HEK293 (cell line): ENCODE measurements at regions of chr17 and their contacts with region 1.

Region 1: GRCh38 chr17:61338000-61338798 is 61.4 kb upstream of the TBX2 start:
- H3K4me3 ChIP-seq: no peak overlapping the region
- H3K27ac ChIP-seq: peak overlapping the region; percentile 42
- H3K4me1 ChIP-seq: peaks cover 33% of the 10 kb centered on the region
- CTCF ChIP-seq: no peak

Region 2: DNA sequence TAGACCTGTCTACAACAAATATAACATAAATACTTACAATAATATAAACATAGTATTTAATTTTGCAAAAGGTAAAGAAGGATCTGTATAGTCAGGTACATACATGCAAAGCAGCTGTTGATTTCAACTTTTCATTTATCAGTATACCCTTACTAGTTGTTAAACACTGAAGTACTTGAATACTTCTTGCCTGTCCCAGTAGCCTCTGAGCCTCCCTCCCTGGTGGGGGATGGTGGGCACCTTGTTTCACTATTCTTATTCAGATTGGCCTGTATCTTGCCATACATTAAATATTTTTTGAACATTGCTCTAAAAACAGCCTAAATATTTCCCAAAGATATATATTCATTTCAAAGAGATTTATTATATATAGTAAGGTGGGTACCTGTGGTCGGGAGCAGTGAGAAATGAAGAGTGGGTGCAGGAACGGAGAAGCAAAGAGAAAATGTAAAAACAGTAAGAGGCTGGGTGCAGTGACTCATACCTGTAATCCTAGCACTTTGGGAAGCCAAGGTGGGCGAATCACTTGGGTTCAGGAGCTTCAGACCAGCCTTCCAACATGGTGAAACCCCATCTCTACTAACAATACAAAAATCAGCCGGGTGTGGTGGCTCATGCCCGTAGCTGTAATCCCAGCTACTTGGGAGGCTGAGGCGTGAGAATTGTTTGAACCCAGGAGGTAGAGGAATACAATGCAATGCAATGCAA is 403.6 kb before region 1 on chr17:
- CTCF ChIA-PET with region 1: no interaction called
- POLR2A ChIA-PET with region 1: no interaction called
- H3K4me3 ChIP-seq: no peak overlapping the region
- H3K27ac ChIP-seq: no peak overlapping the region
- H3K4me1 ChIP-seq: no peaks in the 10 kb centered on the region
- CTCF ChIP-seq: no peak

Region 3: GRCh38 chr17:61247439-61247838 is 90.8 kb before region 1 on chr17:
- CTCF ChIA-PET with region 1: no interaction called
- POLR2A ChIA-PET with region 1: no interaction called
- H3K4me3 ChIP-seq: no peak overlapping the region
- H3K27ac ChIP-seq: peak overlapping the region; percentile 52
- H3K4me1 ChIP-seq: peaks cover 45% of the 10 kb centered on the region
- CTCF ChIP-seq: 0 out of 2 replicates have a peak, but pooled peaks have one; percentile 10

Region 4: DNA sequence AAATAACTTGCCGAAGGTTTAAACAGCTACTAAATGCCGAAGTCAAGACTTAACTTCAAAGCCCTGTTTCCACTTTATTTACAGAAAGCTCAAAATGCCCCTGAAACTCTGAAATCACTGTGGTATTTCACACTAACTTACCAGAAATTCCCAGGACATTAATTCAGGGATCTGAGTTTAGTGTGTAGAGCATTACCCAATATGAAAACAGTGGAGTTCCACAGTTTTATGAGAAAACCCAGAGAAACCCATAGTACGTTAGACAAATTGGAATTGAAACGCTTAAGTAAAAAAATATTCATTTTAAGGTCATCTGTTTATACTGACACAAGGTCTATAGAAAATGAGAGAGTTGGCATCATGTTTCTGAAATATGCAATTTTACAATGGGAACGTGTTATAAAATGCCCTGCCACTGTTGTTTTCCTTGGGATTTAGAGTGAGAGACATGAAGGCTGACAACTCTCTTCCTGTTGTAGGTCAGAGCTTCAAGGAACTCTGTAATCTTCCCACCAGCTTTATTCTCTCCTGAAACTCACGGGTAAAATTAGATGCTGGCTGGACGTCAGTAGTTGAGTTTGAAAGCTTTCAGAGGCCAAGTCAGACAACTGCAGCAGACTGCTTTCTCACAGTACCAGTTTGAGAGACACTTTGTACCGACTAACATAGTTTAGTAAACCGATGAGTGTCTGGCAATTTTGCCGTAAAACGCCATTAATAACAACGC is 78.0 kb before region 1 on chr17:
- CTCF ChIA-PET with region 1: no interaction called
- POLR2A ChIA-PET with region 1: no interaction called
- H3K4me3 ChIP-seq: no peak overlapping the region
- H3K27ac ChIP-seq: peak overlapping the region; percentile 53
- H3K4me1 ChIP-seq: peaks cover 19% of the 10 kb centered on the region
- CTCF ChIP-seq: no peak

Region 5: GRCh38 chr17:61284174-61284573 is 54.0 kb before region 1 on chr17:
- CTCF ChIA-PET with region 1: no interaction called
- POLR2A ChIA-PET with region 1: no interaction called
- H3K4me3 ChIP-seq: no peak overlapping the region
- H3K27ac ChIP-seq: peak overlapping the region; percentile 19; the same call in 1 of the 2 replicates
- H3K4me1 ChIP-seq: peaks cover 22% of the 10 kb centered on the region
- CTCF ChIP-seq: no peak

Region 6: GRCh38 chr17:61362396-61362795 is 24.2 kb after region 1 on chr17:
- CTCF ChIA-PET with region 1: interaction called, 3 read pairs
- POLR2A ChIA-PET with region 1: interaction called, 13 read pairs
- H3K4me3 ChIP-seq: no peak overlapping the region
- H3K27ac ChIP-seq: no peak overlapping the region
- H3K4me1 ChIP-seq: no peaks in the 10 kb centered on the region
- CTCF ChIP-seq: no peak